ENCODE measurements at regions of chr10 and their contacts with region 1.

Region 1: GRCh38 chr10:17989908-17990767 is 38.4 kb downstream of the SLC39A12 start:
- DNase-seq: peak; percentile 84
- H3K4me3 ChIP-seq: no peak overlapping the region
- H3K27ac ChIP-seq: no peak overlapping the region
- H3K4me1 ChIP-seq: no peaks in the 10 kb centered on the region
- H3K27me3 ChIP-seq: no peaks in the 10 kb centered on the region
- CTCF ChIP-seq: no peak

Region 2: DNA sequence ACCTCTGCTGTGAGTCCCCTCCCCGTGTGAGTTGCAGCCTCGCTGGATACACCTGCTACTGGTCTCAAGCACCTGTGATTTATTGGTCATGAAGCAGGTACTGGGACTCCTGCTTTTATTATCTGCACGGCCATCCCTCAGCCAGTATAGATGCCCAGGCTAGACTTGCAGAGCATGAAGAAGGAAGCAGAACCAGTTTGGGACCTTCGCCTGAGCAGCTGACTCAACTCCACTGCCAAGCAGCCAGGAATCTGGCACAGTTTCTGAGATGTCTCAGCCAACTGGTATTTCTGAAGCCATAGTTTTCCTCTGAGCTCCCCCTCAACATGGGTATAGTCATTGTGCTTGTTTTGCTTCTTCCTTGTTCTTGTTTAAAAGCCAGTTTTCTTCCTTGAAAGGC is 66.4 kb before region 1 on chr10:
- CTCF ChIA-PET with region 1: no interaction called
- dilution Hi-C with region 1: no loop called
- in situ Hi-C with region 1: no loop called
- intact Hi-C with region 1: loop called (anchors 5 kb)
- DNase-seq: peak; percentile 83
- H3K4me3 ChIP-seq: no peak overlapping the region
- H3K27ac ChIP-seq: no peak overlapping the region
- H3K4me1 ChIP-seq: no peaks in the 10 kb centered on the region
- H3K27me3 ChIP-seq: no peaks in the 10 kb centered on the region
- CTCF ChIP-seq: no peak

Region 3: DNA sequence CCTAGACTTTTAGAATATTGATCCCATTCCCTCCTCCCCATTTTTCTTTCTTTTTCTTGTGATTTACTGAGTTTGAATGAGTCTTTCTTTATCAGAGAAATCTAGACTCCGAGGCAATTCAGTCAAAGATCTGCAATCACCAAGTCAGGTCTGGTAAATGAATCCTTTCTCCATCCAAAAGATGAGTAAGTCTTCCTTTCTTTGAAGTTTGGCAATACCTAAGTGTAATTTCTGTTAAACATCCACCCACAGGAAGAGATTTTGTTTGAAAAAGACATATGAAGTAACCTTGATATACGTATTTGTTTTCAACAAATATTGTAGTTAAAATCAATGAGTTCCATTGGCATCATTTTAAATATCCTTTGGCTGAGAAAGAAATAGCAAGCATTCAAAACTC is 19.9 kb after region 1 on chr10:
- CTCF ChIA-PET with region 1: no interaction called
- dilution Hi-C with region 1: no loop called
- in situ Hi-C with region 1: no loop called
- intact Hi-C with region 1: loop called (anchors 2 kb)
- DNase-seq: peak; percentile 37
- H3K4me3 ChIP-seq: no peak overlapping the region
- H3K27ac ChIP-seq: no peak overlapping the region
- H3K4me1 ChIP-seq: no peaks in the 10 kb centered on the region
- H3K27me3 ChIP-seq: no peaks in the 10 kb centered on the region
- CTCF ChIP-seq: no peak